ENCODE measurements at regions of chr13 and their contacts with region 1.

Region 1: GRCh38 chr13:75326173-75327134 is 155.5 kb downstream of the TBC1D4 start:
- DNase-seq: peak; percentile 79
- ATAC-seq: peak; percentile 87
- H3K4me3 Mint-ChIP-seq: peak overlapping the region; percentile 88
- H3K27ac Mint-ChIP-seq: peak overlapping the region; percentile 98
- H3K4me1 Mint-ChIP-seq: peaks cover 35% of the 10 kb centered on the region
- H3K27me3 Mint-ChIP-seq: no peaks in the 10 kb centered on the region

Region 2: DNA sequence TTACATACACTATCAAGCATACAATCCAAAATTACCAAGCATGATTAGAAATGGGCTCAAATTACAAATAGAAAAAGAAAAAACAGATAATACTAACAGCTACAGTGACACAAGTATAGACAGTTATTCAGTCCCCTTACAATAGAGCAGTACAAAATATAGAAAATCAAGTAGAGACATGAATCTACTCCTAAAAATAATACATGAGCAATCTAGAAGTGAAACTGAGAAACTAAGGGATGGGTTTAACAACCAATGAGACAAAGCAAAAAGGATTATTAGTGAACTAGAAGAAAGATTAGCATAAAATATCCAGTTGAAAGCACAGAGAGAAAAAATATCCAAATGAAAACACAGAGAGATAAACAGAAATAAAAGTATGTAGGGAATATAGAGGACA is 271.2 kb before region 1 on chr13:
- CTCF ChIA-PET with region 1: no interaction called
- POLR2A ChIA-PET with region 1: no interaction called
- intact Hi-C with region 1: no loop called
- DNase-seq: no peak
- ATAC-seq: no peak
- H3K4me3 Mint-ChIP-seq: no peak overlapping the region
- H3K27ac Mint-ChIP-seq: no peak overlapping the region
- H3K4me1 Mint-ChIP-seq: no peaks in the 10 kb centered on the region
- H3K27me3 Mint-ChIP-seq: peaks cover 12% of the 10 kb centered on the region

Region 3: DNA sequence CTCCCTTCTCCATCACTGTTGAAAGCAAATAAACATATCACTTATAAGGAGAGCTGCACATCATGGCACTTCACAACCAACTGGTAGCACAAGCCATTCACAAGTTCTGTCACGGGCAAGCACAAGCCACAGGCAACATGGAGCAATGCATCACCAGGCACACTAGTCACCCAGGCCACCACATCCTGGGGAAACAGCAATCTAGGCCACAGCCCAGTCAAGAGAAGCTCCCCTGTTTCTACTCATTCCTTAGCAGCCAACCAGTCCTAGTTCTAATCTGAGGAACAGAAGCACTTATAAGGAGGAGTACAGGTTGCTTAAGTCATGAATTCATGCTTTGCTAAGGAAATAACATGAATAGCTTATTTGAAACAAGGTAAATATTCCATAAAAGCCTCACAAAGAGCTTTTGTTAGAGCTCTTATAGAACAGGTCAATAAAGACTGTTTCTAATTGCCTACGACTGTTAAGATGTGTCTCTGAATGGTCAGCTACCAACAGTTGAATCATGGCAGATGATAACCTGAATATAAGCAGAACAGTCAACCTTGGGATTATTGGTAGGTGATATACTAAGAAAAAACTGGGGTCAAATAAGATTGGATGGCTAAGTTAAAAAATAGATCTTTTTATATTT is 13.5 kb before region 1 on chr13:
- CTCF ChIA-PET with region 1: interaction called, 11 read pairs
- POLR2A ChIA-PET with region 1: interaction called, 9 read pairs
- intact Hi-C with region 1: loop called (anchors 1 kb)
- DNase-seq: peak; percentile 81
- ATAC-seq: peak; percentile 92
- H3K4me3 Mint-ChIP-seq: no peak overlapping the region
- H3K27ac Mint-ChIP-seq: peak overlapping the region; percentile 64
- H3K4me1 Mint-ChIP-seq: peaks cover 65% of the 10 kb centered on the region
- H3K27me3 Mint-ChIP-seq: no peaks in the 10 kb centered on the region

Region 4: DNA sequence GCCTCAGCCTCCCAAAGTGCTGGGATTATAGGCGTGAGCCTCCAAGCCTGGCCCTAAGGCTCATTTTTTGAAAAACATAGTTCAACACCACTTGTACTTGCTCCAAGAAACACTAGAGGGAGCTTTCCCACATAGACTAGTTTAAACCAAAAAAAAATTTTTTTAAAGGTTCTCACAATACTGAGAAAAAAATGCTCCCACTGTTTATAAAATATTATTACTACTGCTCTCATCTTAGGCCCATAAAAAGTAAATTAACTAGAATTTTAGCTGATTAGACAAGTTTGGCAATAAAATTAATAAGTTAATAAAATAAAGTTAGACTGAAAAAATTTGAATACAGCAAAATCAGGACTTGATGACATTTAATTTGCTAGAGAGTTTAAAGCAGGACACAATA is 46.1 kb after region 1 on chr13:
- CTCF ChIA-PET with region 1: interaction called, 25 read pairs
- POLR2A ChIA-PET with region 1: no interaction called
- intact Hi-C with region 1: no loop called
- DNase-seq: no peak
- ATAC-seq: peak; percentile 71
- H3K4me3 Mint-ChIP-seq: no peak overlapping the region
- H3K27ac Mint-ChIP-seq: no peak overlapping the region
- H3K4me1 Mint-ChIP-seq: peaks cover 6% of the 10 kb centered on the region
- H3K27me3 Mint-ChIP-seq: no peaks in the 10 kb centered on the region

Region 5: GRCh38 chr13:75549262-75550158 is 223.1 kb after region 1 on chr13 and contains the start of gene UCHL3:
- CTCF ChIA-PET with region 1: no interaction called
- POLR2A ChIA-PET with region 1: no interaction called
- intact Hi-C with region 1: loop called in 1 of 2 experiments (anchors 1 kb)
- DNase-seq: peak; percentile 99
- ATAC-seq: peak; percentile 96
- H3K4me3 Mint-ChIP-seq: peak within 1 kb of the TSS; percentile 85
- H3K27ac Mint-ChIP-seq: peak within 1 kb of the TSS; percentile 95
- H3K4me1 Mint-ChIP-seq: peaks cover 41% of the 10 kb centered on the region
- H3K27me3 Mint-ChIP-seq: no peaks in the 10 kb centered on the region
- total RNA-seq, gene UCHL3: 42.2 to 45.3 TPM

Region 6: GRCh38 chr13:76004416-76004815 is 678.0 kb after region 1 on chr13:
- CTCF ChIA-PET with region 1: no interaction called
- POLR2A ChIA-PET with region 1: no interaction called
- intact Hi-C with region 1: no loop called
- DNase-seq: no peak
- ATAC-seq: no peak
- H3K4me3 Mint-ChIP-seq: no peak overlapping the region
- H3K27ac Mint-ChIP-seq: no peak overlapping the region
- H3K4me1 Mint-ChIP-seq: peaks cover 2% of the 10 kb centered on the region
- H3K27me3 Mint-ChIP-seq: no peaks in the 10 kb centered on the region

Region 7: DNA sequence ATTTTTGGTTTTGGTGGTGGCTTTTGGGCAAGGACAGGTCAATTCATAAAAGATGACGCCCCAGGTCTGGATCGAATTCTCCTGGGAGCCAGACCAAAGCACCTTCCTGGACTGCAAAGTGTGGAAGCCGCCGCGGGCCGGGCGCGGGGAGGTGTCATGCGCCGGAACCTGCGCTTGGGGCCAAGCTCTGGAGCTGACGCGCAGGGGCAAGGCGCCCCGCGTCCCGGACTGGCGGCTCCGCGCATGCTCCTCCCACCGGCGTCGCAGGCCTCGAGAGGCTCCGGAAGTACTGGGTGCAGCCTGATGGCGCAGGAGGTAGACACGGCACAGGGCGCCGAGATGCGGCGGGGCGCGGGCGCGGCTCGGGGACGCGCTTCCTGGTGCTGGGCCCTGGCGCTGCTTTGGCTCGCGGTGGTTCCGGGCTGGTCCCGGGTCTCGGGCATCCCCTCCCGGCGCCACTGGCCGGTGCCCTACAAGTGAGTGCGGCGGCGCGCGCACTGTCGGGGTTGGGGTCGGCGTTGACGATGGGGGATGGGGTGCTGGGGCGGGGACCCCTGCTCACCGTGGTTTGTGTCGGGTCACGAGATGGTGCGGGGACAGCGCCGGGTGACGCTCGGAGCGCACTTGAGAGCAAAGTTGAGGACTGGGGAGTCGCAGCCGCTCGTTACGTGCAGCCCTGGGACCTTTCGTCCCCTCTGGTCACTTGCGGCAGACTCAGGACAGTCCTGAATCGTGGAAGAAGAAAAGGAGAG is 1665.5 kb after region 1 on chr13 and contains the start of gene CLN5:
- CTCF ChIA-PET with region 1: no interaction called
- POLR2A ChIA-PET with region 1: no interaction called
- intact Hi-C with region 1: loop called in 1 of 2 experiments (anchors 5 kb)
- DNase-seq: peak; percentile 97
- ATAC-seq: peak; percentile 93
- H3K4me3 Mint-ChIP-seq: peak within 1 kb of the TSS; percentile 97
- H3K27ac Mint-ChIP-seq: peak within 1 kb of the TSS; percentile 99
- H3K4me1 Mint-ChIP-seq: peaks cover 36% of the 10 kb centered on the region
- H3K27me3 Mint-ChIP-seq: peaks cover 3% of the 10 kb centered on the region
- total RNA-seq, gene CLN5: 14.5 to 14.9 TPM

Measured in activated CD4-positive, alpha-beta T cell treated with anti-CD3 and anti-CD28 coated beads for 36 hours (primary cell).